Heart right ventricle (tissue), 16 donors: ENCODE measurements at regions of chr1 and their contacts with region 1.

Region 1: DNA sequence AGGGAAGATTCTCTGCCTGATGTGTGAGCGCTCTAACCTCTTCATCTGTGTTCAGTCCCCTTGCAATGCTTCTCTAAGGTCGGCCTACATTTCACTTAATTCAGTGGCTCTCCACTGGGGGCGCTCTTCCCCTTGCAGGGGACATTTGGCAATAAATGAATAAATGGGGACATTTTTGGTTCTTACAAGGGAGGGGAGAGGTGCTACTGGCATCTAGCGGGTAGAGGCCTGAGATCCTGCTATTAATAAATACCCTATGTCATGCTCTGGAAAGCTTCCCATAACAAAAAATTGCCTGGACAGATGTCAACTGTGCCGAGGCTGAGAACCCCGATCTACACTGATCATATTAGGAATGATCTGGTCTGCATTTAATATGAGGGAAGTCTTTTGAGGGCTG is 25.9 kb upstream of the DNAJC11 start:
- DNase-seq: peak; percentile 41 to 44
- ATAC-seq: peak; percentile 28 to 68 (median 58)
- H3K4me3 ChIP-seq: no peak overlapping the region
- H3K27ac ChIP-seq: no peak overlapping the region
- H3K4me1 ChIP-seq: peaks cover 0 to 14% (median 0%) of the 10 kb centered on the region in 9 donors
- H3K27me3 ChIP-seq: no peaks in the 10 kb centered on the region
- CTCF ChIP-seq: peak; percentile 72 to 90 (median 85)

Region 2: DNA sequence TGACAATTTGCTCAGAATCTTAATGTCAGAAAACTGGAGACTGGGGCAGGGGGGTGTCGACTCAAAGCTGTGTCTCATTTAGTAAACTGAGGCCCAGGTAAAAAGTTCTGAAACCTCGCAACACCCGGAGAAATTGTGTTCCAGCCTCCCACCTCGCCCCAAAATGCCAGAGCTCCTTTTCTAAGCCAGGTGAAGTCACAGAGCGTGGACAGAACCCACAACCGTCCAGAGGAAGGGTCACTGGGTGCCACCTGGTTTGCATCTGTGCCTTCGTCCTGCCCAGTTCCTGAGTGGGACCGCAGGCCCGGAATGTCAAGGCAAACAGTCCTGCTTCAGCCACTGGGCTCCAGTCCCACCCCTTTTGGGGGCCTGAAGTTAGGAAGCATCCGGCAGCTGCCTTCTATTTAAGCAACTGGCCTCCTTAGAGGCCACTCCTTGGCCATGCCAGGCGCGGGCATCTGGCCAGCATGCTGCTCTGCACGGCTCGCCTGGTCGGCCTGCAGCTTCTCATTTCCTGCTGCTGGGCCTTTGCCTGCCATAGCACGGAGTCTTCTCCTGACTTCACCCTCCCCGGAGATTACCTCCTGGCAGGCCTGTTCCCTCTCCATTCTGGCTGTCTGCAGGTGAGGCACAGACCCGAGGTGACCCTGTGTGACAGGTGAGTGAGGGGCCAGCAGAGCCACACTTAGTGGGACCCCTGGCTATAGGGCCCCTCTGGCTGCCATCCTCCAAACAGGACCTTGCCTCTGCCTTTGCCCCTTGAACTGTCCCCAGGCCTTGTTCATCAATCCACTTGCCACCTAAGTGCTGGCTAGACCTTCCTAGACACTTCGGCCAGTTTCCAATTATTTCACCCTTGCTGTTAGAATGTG is 172.4 kb before region 1 on chr1 and contains the start of gene TAS1R1:
- intact Hi-C with region 1: no loop called
- DNase-seq: peak; percentile 7 to 42
- ATAC-seq: peak; percentile 6 to 56 (median 32)
- H3K4me3 ChIP-seq: peak within 1 kb of the TSS; percentile 79 to 100 (median 94)
- H3K27ac ChIP-seq: peak within 1 kb of the TSS; percentile 20 to 90 (median 85)
- H3K4me1 ChIP-seq: peaks cover 10 to 26% (median 22%) of the 10 kb centered on the region in 9 donors
- H3K27me3 ChIP-seq: no peaks in the 10 kb centered on the region
- CTCF ChIP-seq: no peak
- total RNA-seq, gene TAS1R1: not detected

Region 3: DNA sequence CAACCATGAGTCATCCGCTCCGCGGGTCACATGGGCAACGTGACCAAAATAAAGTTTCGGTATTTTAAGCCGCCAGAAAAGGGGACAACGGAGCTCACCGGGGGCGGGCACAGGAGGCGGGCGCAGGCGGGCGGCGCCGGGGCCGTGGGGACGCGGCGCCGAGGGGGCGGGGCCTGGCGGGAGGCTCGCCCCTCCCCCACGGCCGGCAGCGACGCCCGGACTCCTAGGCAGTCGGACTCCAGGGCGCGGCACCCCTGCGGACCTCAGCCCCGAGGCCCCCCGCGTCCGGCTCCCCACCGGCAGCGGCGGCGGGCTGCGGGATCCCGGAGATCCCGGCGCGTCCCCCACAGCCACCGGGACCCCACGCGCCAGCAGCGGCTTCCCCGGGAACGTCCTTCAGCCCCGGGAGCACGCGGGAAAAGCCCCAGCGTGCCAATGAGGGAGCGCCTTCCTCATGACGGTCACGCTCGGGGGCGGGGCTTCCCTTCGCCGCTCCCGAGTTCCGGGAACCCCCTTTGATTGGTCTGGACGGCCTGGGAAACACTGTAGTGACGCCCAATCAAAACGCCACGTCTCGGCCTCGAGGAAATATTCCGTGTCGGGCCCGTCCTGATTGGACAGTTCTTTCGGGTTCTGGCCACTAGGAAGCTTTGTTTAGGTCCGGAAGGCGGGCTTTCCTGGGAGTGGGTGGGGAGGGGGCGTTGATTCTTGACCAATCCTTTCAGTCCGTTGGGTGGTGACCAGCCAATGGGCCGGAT is 57.2 kb after region 1 on chr1:
- intact Hi-C with region 1: loop called in 2 of 10 experiments (anchors 2 to 10 kb)
- DNase-seq: peak; percentile 99 to 100
- ATAC-seq: peak; percentile 90 to 97 (median 96)
- H3K4me3 ChIP-seq: peak overlapping the region; percentile 70 to 100 (median 80)
- H3K27ac ChIP-seq: peak overlapping the region; percentile 96 to 100 (median 98)
- H3K4me1 ChIP-seq: peaks cover 5 to 49% (median 39%) of the 10 kb centered on the region in 9 donors
- H3K27me3 ChIP-seq: no peaks in the 10 kb centered on the region
- CTCF ChIP-seq: no peak

Region 4: DNA sequence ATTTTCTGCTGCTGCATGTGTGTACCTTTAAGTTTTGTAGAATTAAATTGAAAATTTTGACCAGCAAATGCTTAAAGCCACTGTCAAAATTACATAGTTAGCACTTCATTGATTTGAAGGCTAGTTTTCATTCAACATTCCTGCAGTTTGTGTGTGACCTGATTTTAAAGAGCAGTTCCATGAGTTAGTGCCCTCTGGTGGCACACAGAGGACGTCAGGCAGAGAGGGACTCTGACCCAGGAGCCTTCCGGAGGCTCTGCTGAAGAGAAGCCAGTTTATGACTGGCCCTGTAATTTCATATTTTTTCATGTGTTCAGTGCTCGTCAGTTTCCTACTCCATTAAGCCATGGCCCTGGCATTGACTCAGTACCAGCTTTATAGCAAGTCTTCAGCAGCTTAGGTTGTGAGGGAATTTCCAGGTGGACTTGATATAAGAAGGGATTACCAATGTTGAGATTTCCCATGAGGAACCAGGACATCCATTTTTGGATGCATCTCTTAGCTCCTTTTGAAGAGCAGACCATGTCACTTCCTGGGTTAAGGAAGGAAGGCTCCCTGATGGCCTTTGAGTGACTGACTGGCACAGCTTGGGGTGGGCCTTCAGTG is 162.4 kb after region 1 on chr1:
- intact Hi-C with region 1: loop called in 9 of 10 experiments (anchors 5 to 10 kb)
- DNase-seq: peak in 1 of 2 donors; percentile 40
- ATAC-seq: peak in 7 of 8 donors; percentile 61 to 84 (median 73)
- H3K4me3 ChIP-seq: no peak overlapping the region
- H3K27ac ChIP-seq: no peak overlapping the region
- H3K4me1 ChIP-seq: peaks cover 0 to 9% (median 6%) of the 10 kb centered on the region in 9 donors
- H3K27me3 ChIP-seq: no peaks in the 10 kb centered on the region
- CTCF ChIP-seq: peak; percentile 55 to 90 (median 82)

Region 5: GRCh38 chr1:7050751-7051668 is 323.5 kb after region 1 on chr1:
- intact Hi-C with region 1: loop called in 1 of 10 experiments (anchors 10 kb)
- DNase-seq: no peak
- ATAC-seq: no peak
- H3K4me3 ChIP-seq: no peak overlapping the region
- H3K27ac ChIP-seq: no peak overlapping the region
- H3K4me1 ChIP-seq: no peaks in the 10 kb centered on the region
- H3K27me3 ChIP-seq: peaks cover 0 to 17% (median 6%) of the 10 kb centered on the region in 7 donors
- CTCF ChIP-seq: no peak

Region 6: GRCh38 chr1:7070389-7071029 is 343.0 kb after region 1 on chr1:
- intact Hi-C with region 1: loop called in 6 of 10 experiments (anchors 5 kb)
- DNase-seq: peak; percentile 42 to 66
- ATAC-seq: peak; percentile 71 to 92 (median 84)
- H3K4me3 ChIP-seq: peak overlapping the region in 9 of 10 donors; percentile 17 to 53 (median 42)
- H3K27ac ChIP-seq: no peak overlapping the region
- H3K4me1 ChIP-seq: peaks cover 0 to 9% (median 7%) of the 10 kb centered on the region in 9 donors
- H3K27me3 ChIP-seq: peaks cover 0 to 11% (median 0%) of the 10 kb centered on the region in 7 donors
- CTCF ChIP-seq: peak; percentile 70 to 90 (median 84)

Region 7: GRCh38 chr1:7218210-7218832 is 490.8 kb after region 1 on chr1:
- intact Hi-C with region 1: loop called in 4 of 10 experiments (anchors 5 to 10 kb)
- DNase-seq: no peak
- ATAC-seq: no peak
- H3K4me3 ChIP-seq: no peak overlapping the region
- H3K27ac ChIP-seq: no peak overlapping the region
- H3K4me1 ChIP-seq: no peaks in the 10 kb centered on the region
- H3K27me3 ChIP-seq: peaks cover 0 to 18% (median 0%) of the 10 kb centered on the region in 7 donors
- CTCF ChIP-seq: peak; percentile 31 to 69 (median 62)